RWPE1 (cell line): ENCODE measurements at regions of chr19 and their contacts with region 1.

Region 1: GRCh38 chr19:45817010-45817724 is 2.1 kb upstream of the RSPH6A start:
- DNase-seq: peak; percentile 96
- H3K27ac ChIP-seq: peak overlapping the region; percentile 70
- CTCF ChIP-seq: peak; percentile 97

Region 2: DNA sequence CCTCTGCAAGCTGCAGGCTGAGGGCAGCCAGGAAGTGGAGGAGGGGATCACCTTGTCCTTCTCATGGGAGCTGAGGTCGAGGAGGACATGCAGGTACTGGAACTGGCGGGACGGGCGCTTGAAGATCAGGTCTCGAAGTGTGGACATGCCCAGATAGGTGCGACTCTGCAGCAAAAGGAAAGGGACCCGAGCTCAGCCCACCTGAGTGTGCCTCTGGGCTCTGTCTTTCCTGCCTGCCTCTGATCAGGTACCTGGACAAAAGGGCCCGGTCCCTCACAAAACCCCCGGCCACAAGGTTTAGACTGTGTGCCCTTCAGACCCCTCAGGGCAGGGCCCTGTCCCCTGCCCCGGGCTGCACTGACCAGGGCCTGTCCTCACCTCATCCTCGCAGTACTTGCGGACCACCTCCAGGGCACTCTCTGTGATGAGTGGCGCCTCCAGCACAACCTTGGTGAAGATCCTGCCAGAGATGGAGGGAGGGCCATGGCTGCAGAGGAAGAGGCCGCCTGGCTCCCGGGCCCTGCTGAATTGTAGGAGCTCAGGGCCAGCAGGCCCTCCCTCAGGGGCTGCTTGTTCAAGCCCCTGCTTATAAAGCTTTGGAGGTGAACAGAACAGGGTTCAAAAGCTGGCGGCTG is 10.4 kb after region 1 on chr19:
- CTCF ChIA-PET with region 1: interaction called, 20 read pairs
- POLR2A ChIA-PET with region 1: no interaction called
- DNase-seq: no peak
- H3K27ac ChIP-seq: peak overlapping the region; percentile 73; the same call in 1 of the 2 replicates
- CTCF ChIP-seq: no peak